ENCODE measurements at regions of chr17 and their contacts with region 1.

Region 1: DNA sequence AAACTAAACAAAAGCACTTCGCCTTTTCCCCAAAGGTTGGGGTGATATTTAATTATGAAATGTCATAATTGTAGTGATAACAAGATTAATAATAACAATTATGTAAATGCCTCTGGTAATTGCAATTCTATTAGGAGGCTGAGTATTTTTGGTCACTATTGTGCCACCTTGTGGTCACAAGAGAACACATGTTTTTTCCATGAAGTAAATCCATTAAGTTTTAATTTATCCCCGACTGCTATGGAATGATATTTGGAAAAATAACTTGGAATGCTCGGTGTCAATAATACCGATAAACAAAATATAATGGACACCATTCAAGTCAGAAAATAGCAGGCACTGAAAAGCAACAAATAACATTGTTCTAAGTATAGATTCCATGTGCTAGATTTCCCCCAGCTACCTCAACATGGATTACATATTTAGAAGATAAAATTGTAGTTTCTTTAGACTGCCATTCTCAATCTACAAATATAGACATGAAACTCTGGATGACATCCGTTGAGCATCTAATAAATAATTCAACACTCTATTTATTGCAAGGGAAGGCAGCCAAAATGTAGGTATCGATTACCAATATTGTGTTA is 25.0 kb upstream of the KCNJ2 start:
- DNase-seq: no peak
- H3K4me3 ChIP-seq: no peak overlapping the region
- H3K4me3 Mint-ChIP-seq: no peak overlapping the region
- H3K27ac Mint-ChIP-seq: no peak overlapping the region
- H3K4me1 ChIP-seq: no peaks in the 10 kb centered on the region
- H3K4me1 Mint-ChIP-seq: no peaks in the 10 kb centered on the region
- H3K27me3 ChIP-seq: no peaks in the 10 kb centered on the region
- H3K27me3 Mint-ChIP-seq: peaks cover 9% of the 10 kb centered on the region
- CTCF ChIP-seq: peak; percentile 52 to 71

Region 2: GRCh38 chr17:69574257-69575197 is 569.8 kb before region 1 on chr17:
- CTCF ChIA-PET with region 1: no interaction called
- POLR2A ChIA-PET with region 1: no interaction called
- intact Hi-C with region 1: loop called (anchors 1 kb)
- DNase-seq: no peak
- H3K4me3 ChIP-seq: no peak overlapping the region
- H3K4me3 Mint-ChIP-seq: no peak overlapping the region
- H3K27ac Mint-ChIP-seq: no peak overlapping the region
- H3K4me1 ChIP-seq: no peaks in the 10 kb centered on the region
- H3K4me1 Mint-ChIP-seq: no peaks in the 10 kb centered on the region
- H3K27me3 ChIP-seq: no peaks in the 10 kb centered on the region
- H3K27me3 Mint-ChIP-seq: peaks cover 8% of the 10 kb centered on the region
- CTCF ChIP-seq: no peak

Region 3: DNA sequence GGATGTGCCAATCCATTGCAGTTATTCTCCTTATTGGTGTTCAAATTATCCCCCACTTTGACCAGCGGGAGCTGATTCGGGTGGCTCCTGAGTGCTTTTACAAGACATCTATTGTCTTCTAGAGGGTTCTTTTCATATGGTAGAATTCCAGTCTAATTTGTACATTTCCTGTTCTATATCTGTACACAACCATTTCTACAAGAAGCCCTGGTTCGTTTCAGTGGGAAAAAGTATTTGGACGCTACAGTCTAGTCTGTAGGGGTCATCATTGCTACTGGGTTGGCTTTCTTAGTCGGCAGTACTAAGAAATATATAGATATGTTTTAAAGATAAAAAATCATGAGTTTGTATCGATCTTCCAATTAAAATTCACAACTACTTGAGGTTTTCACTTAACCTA is 467.2 kb before region 1 on chr17:
- CTCF ChIA-PET with region 1: no interaction called
- POLR2A ChIA-PET with region 1: no interaction called
- intact Hi-C with region 1: loop called (anchors 1 kb)
- DNase-seq: no peak
- H3K4me3 ChIP-seq: no peak overlapping the region
- H3K4me3 Mint-ChIP-seq: no peak overlapping the region
- H3K27ac Mint-ChIP-seq: no peak overlapping the region
- H3K4me1 ChIP-seq: no peaks in the 10 kb centered on the region
- H3K4me1 Mint-ChIP-seq: no peaks in the 10 kb centered on the region
- H3K27me3 ChIP-seq: no peaks in the 10 kb centered on the region
- H3K27me3 Mint-ChIP-seq: no peaks in the 10 kb centered on the region
- CTCF ChIP-seq: peak in 1 of 2 experiments; percentile 24

Region 4: GRCh38 chr17:69723742-69724141 is 420.6 kb before region 1 on chr17:
- CTCF ChIA-PET with region 1: no interaction called
- POLR2A ChIA-PET with region 1: no interaction called
- intact Hi-C with region 1: loop called (anchors 1 kb)
- DNase-seq: no peak
- H3K4me3 ChIP-seq: no peak overlapping the region
- H3K4me3 Mint-ChIP-seq: no peak overlapping the region
- H3K27ac Mint-ChIP-seq: no peak overlapping the region
- H3K4me1 ChIP-seq: no peaks in the 10 kb centered on the region
- H3K4me1 Mint-ChIP-seq: no peaks in the 10 kb centered on the region
- H3K27me3 ChIP-seq: no peaks in the 10 kb centered on the region
- H3K27me3 Mint-ChIP-seq: peaks cover 5% of the 10 kb centered on the region
- CTCF ChIP-seq: peak in 1 of 2 experiments; percentile 28

Region 5: DNA sequence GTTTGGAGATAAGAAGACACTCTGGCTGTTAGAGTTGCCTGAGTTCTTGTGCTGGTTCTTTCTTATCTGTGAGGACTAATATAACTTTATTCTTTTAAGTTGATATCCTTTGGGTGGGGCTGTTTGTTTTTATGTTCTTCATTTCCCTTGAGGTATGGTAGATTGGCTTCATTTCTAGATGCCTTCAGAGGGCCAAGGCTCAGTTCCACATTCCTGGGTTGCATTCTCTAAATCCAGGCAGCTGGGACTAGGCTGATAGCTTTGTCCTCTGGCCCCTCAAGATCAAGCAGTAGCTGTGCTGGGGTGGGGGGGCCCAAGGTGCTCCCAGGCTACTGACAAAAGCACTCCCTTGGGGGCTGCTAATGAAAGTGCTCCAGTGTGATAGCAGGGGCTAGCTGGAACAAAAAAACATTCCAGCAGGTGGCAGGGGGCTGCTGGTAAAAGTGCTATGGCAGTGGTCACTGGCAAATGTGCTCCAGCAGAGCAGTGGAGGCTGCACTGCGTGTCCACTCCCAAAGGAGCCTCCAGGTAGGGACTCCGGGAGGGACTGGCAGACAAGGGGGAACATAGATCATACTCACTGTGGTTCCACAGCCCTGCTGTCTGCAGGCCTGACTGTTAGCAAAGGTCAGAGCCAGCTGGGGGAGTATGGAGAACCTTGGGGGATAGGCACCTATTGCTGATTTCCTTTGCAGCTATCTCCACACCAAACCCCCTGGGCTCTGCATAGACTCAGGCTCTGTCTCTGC is 115.2 kb before region 1 on chr17:
- CTCF ChIA-PET with region 1: no interaction called
- POLR2A ChIA-PET with region 1: no interaction called
- intact Hi-C with region 1: loop called (anchors 1 kb)
- DNase-seq: peak in 1 of 2 experiments; percentile 40
- H3K4me3 ChIP-seq: no peak overlapping the region
- H3K4me3 Mint-ChIP-seq: no peak overlapping the region
- H3K27ac Mint-ChIP-seq: no peak overlapping the region
- H3K4me1 ChIP-seq: peaks cover 7% of the 10 kb centered on the region
- H3K4me1 Mint-ChIP-seq: peaks cover 8% of the 10 kb centered on the region
- H3K27me3 ChIP-seq: no peaks in the 10 kb centered on the region
- H3K27me3 Mint-ChIP-seq: no peaks in the 10 kb centered on the region
- CTCF ChIP-seq: no peak

Region 6: DNA sequence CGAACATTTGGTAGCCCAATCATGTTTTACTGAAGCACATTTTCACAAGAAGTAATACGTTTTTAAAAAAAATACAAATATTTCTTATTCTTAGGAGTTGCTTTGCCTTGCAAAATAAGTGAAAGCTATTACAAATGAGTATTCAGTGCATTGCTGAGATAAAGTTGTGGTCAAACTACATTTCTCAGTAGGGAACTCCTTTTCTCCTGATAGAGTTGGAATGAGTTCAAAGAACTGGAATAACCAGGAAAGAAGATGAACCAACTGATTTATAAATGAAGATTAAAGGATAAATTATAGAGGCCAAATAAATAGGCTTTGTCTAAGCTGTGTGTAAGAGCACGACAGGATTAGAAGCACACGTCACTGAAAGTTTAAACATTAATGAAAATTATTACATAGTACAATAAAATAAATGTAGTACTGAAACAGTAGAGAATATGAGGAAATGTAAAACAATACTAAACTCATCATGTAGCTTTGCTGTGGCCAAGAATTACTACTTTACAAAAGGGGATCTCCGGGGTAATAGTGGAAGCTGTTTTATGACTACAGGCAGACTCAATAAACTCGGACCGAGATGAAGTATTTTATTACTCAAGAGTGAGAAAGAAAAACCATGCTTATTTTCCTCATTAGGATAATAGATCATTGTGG is 98.6 kb after region 1 on chr17:
- CTCF ChIA-PET with region 1: no interaction called
- POLR2A ChIA-PET with region 1: no interaction called
- intact Hi-C with region 1: no loop called
- DNase-seq: no peak
- H3K4me3 ChIP-seq: no peak overlapping the region
- H3K4me3 Mint-ChIP-seq: no peak overlapping the region
- H3K27ac Mint-ChIP-seq: no peak overlapping the region
- H3K4me1 ChIP-seq: peaks cover 23% of the 10 kb centered on the region
- H3K4me1 Mint-ChIP-seq: peaks cover 22% of the 10 kb centered on the region
- H3K27me3 ChIP-seq: no peaks in the 10 kb centered on the region
- H3K27me3 Mint-ChIP-seq: no peaks in the 10 kb centered on the region
- CTCF ChIP-seq: no peak

Measured in Caco-2 (cell line).